ENCODE measurements at regions of chr14 and their contacts with region 1.

Region 1: DNA sequence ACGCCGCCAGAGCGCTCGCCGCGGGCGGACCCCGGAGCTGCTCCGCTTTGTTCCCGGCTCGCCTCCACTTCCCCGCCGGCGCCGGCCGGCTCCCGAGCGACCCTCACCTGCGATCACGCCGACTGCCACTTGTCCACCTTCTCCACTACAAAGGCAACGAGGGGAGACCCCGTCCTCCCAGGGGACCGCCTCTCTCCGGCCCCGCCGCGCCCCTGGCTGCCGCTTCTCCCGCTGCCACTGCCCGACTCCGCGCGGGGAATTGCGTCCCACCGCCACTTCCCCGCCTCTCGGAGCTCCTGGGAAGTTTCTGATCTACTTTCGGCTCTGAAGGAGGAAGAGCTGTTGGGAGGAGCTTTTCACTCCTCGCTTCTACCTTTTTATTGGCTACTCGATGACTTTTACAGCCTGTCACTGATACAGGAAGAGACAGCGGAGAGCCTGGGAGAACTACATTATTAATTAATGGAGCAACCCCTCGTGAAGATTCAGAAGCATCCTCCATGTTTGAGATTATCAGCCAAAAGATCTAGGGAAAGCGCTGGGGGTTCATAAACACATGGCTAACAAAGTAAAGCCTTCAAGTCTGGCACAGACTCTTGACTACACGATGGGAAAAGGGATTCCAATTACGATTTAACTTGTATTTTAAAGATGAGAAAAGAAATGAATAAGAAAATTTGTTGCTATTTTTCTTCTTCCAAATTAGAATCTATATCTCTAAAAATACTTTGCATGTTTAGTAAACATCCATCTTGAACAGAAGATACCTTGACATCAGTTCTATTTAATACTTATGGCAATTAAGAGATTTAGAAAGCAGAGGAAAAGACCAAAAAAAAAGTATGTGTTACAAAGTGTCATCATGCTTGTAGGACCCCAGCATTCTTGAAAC is at the start of gene BAZ1A:
- DNase-seq: peak; percentile 72
- ATAC-seq: peak; percentile 9
- H3K4me3 ChIP-seq: peak within 1 kb of the TSS; percentile 89 to 97 (median 92)
- H3K4me3 Mint-ChIP-seq: peak within 1 kb of the TSS; percentile 100
- H3K27ac ChIP-seq: peak within 1 kb of the TSS; percentile 100
- H3K27ac Mint-ChIP-seq: peak within 1 kb of the TSS; percentile 100
- H3K4me1 ChIP-seq: peaks cover 18% of the 10 kb centered on the region in 2 donors
- H3K4me1 Mint-ChIP-seq: peaks cover 37% of the 10 kb centered on the region
- H3K27me3 ChIP-seq: no peaks in the 10 kb centered on the region
- H3K27me3 Mint-ChIP-seq: no peaks in the 10 kb centered on the region
- CTCF ChIP-seq: no peak
- total RNA-seq, gene BAZ1A: 36.8 and 41.7 TPM in 2 replicates

Region 2: DNA sequence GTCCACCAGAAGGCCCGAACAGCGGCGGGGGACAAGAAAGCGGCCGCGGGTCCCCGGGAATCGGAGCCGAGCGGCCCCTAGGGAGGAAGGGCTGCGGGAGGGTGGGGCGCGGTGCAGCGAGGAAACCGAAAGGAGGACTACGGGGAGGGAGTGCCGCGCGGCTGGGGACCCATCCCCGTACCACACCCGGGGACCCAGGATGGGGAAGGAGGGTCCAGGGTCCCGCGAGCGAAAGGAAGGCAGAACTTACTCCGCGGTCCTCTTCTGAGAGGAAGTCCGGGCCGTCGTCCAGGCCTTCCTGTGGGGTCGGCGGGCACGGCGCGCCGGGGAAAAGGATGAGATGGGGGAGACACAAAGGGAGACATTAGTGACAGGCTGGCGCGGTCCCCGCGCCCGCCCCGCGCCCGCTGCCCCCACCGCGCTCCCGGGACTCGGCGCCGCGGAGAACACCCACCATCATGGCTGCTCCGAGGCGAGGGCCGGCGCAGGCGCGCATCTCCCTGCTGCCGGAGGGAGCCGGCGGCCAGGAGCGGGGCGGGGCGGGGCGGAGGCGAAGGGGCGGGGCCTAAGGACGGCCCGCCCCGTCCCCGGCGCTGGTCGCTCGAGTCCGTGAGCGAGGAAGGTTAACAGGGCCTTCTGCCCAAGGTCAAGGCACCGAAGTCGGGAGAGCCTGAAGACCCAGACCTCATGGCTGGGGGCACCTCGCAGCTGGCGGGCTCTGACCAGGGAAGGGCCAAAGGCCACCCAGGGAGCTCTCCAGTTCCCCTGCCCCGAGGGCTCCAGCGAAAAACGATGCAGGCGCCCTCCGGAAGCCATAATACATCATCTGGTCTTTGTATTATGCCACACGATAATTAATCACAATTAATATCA is 245.4 kb before region 1 on chr14 and contains the start of gene SNX6:
- CTCF ChIA-PET with region 1: no interaction called
- POLR2A ChIA-PET with region 1: no interaction called
- intact Hi-C with region 1: loop called (anchors 1 kb)
- DNase-seq: peak; percentile 89
- ATAC-seq: peak; percentile 98
- H3K4me3 ChIP-seq: peak within 1 kb of the TSS; percentile 50 to 98 (median 96)
- H3K4me3 Mint-ChIP-seq: peak within 1 kb of the TSS; percentile 95
- H3K27ac ChIP-seq: peak within 1 kb of the TSS; percentile 85 to 94
- H3K27ac Mint-ChIP-seq: peak within 1 kb of the TSS; percentile 93
- H3K4me1 ChIP-seq: peaks cover 11 to 18% of the 10 kb centered on the region in 2 donors
- H3K4me1 Mint-ChIP-seq: peaks cover 18% of the 10 kb centered on the region
- H3K27me3 ChIP-seq: peaks cover 0 to 3% (median 0%) of the 10 kb centered on the region in 4 experiments
- H3K27me3 Mint-ChIP-seq: no peaks in the 10 kb centered on the region
- CTCF ChIP-seq: no peak
- total RNA-seq, gene SNX6: 61.0 and 66.3 TPM in 2 replicates

Region 3: DNA sequence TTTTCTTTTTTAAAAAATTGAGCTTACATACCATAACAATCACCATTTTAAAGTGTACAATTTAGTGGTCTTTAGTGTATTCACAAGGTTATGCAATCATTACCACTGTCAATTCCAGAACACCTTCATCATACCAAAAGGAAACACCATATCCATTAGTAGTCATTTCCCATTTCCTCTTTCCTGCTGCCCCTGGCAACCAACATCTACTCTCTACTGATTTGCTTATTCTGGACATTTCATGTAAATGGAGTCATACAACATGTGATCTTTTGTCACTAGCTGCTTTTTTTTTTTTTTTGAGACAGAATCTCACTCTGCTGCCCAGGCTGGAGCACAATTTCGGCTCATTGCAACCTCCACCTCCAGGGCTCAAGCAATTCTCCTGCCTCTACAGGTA is 94.0 kb before region 1 on chr14:
- CTCF ChIA-PET with region 1: interaction called, 3 read pairs
- POLR2A ChIA-PET with region 1: no interaction called
- intact Hi-C with region 1: loop called (anchors 10 kb)
- DNase-seq: no peak
- ATAC-seq: no peak
- H3K4me3 ChIP-seq: no peak overlapping the region
- H3K4me3 Mint-ChIP-seq: no peak overlapping the region
- H3K27ac ChIP-seq: peak overlapping the region in 1 of 2 donors; percentile 25
- H3K27ac Mint-ChIP-seq: no peak overlapping the region
- H3K4me1 ChIP-seq: peaks cover 7 to 11% of the 10 kb centered on the region in 2 donors
- H3K4me1 Mint-ChIP-seq: peaks cover 10% of the 10 kb centered on the region
- H3K27me3 ChIP-seq: no peaks in the 10 kb centered on the region
- H3K27me3 Mint-ChIP-seq: no peaks in the 10 kb centered on the region
- CTCF ChIP-seq: no peak

Region 4: DNA sequence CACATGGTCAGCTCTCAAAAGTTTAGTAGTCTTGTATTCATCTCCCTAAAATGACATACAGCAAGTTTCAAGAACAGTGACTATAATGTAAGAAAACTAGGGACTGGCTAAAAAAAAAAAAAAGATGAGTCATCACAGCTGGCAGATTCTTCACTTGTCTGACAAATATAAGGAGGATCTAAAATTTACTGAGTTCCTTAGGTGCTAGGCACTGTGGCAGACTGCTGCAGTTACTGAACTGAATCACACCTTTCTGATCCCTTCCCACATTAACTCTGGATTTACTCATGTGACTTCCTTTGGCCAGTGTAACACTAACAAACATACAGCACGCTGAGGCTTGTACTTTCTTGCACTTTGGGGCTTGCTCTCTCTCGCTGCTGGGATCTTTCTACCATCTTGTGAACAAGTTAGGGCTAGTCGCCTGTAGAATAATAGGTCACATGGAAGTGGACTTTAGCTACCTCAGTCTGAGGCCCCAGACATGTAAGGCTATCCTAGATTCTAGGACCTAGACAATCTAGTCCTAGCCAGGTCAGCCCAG is 32.2 kb before region 1 on chr14:
- CTCF ChIA-PET with region 1: no interaction called
- POLR2A ChIA-PET with region 1: interaction called, 10 read pairs
- intact Hi-C with region 1: no loop called
- DNase-seq: no peak
- ATAC-seq: no peak
- H3K4me3 ChIP-seq: no peak overlapping the region
- H3K4me3 Mint-ChIP-seq: no peak overlapping the region
- H3K27ac ChIP-seq: no peak overlapping the region
- H3K27ac Mint-ChIP-seq: no peak overlapping the region
- H3K4me1 ChIP-seq: no peaks in the 10 kb centered on the region
- H3K4me1 Mint-ChIP-seq: peaks cover 5% of the 10 kb centered on the region
- H3K27me3 ChIP-seq: no peaks in the 10 kb centered on the region
- H3K27me3 Mint-ChIP-seq: no peaks in the 10 kb centered on the region
- CTCF ChIP-seq: no peak

Region 5: GRCh38 chr14:34912178-34912577 is 36.9 kb after region 1 on chr14:
- CTCF ChIA-PET with region 1: no interaction called
- POLR2A ChIA-PET with region 1: no interaction called
- intact Hi-C with region 1: no loop called
- DNase-seq: peak; percentile 27
- ATAC-seq: no peak
- H3K4me3 ChIP-seq: no peak overlapping the region
- H3K4me3 Mint-ChIP-seq: no peak overlapping the region
- H3K27ac ChIP-seq: no peak overlapping the region
- H3K27ac Mint-ChIP-seq: no peak overlapping the region
- H3K4me1 ChIP-seq: peaks cover 7 to 8% of the 10 kb centered on the region in 2 donors
- H3K4me1 Mint-ChIP-seq: peaks cover 14% of the 10 kb centered on the region
- H3K27me3 ChIP-seq: no peaks in the 10 kb centered on the region
- H3K27me3 Mint-ChIP-seq: no peaks in the 10 kb centered on the region
- CTCF ChIP-seq: no peak

Region 6: GRCh38 chr14:35046048-35046741 is 170.9 kb after region 1 on chr14 and contains the start of gene FAM177A1:
- CTCF ChIA-PET with region 1: no interaction called
- POLR2A ChIA-PET with region 1: interaction called, 6 read pairs
- intact Hi-C with region 1: loop called (anchors 1 kb)
- DNase-seq: peak; percentile 99
- ATAC-seq: peak; percentile 94
- H3K4me3 ChIP-seq: peak within 1 kb of the TSS; percentile 70 to 97 (median 80)
- H3K4me3 Mint-ChIP-seq: peak within 1 kb of the TSS; percentile 87
- H3K27ac ChIP-seq: peak within 1 kb of the TSS; percentile 94 to 96
- H3K27ac Mint-ChIP-seq: peak within 1 kb of the TSS; percentile 95
- H3K4me1 ChIP-seq: peaks cover 11 to 15% of the 10 kb centered on the region in 2 donors
- H3K4me1 Mint-ChIP-seq: peaks cover 26% of the 10 kb centered on the region
- H3K27me3 ChIP-seq: no peaks in the 10 kb centered on the region
- H3K27me3 Mint-ChIP-seq: no peaks in the 10 kb centered on the region
- CTCF ChIP-seq: no peak
- total RNA-seq, gene FAM177A1: 32.1 and 39.4 TPM in 2 replicates

Region 7: GRCh38 chr14:35140718-35141581 is 265.7 kb after region 1 on chr14:
- CTCF ChIA-PET with region 1: no interaction called
- POLR2A ChIA-PET with region 1: no interaction called
- intact Hi-C with region 1: no loop called
- DNase-seq: peak; percentile 29
- ATAC-seq: peak; percentile 41
- H3K4me3 ChIP-seq: no peak overlapping the region
- H3K4me3 Mint-ChIP-seq: no peak overlapping the region
- H3K27ac ChIP-seq: no peak overlapping the region
- H3K27ac Mint-ChIP-seq: no peak overlapping the region
- H3K4me1 ChIP-seq: no peaks in the 10 kb centered on the region
- H3K4me1 Mint-ChIP-seq: no peaks in the 10 kb centered on the region
- H3K27me3 ChIP-seq: no peaks in the 10 kb centered on the region
- H3K27me3 Mint-ChIP-seq: no peaks in the 10 kb centered on the region
- CTCF ChIP-seq: peak; percentile 80

Region 8: DNA sequence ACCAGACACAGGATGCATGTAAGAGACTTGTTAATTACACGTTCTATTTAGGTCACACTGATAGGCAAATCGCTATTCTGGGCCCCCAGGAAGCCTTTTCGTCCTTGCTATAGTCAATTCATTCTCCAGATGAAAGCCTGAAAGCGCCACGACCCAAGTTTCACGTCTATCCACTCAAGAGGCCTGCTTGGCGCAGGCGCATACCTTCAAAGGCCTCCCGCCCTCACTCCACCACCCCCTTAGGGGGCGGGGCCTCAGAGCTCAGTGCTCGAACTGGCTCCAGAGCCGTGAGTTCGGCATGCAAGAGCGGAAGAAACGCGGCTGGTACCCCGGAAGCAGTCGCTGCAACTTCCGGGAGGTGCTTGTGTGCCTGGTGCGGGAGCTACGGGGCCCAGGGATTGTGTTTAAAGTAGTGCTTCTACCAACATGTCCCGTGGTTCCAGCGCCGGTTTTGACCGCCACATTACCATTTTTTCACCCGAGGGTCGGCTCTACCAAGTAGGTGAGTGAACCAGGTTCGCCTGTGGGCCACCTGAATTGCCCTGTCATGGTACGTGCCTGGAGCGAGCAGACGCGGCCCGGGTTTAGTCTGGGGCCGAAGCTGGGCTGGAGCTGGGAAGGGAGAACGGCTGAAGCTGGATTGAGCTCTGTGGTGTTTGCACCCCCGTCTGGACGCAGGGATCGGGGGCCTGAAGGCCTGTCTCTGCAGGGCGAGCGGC is 416.9 kb after region 1 on chr14 and contains the start of gene PSMA6:
- CTCF ChIA-PET with region 1: no interaction called
- POLR2A ChIA-PET with region 1: no interaction called
- intact Hi-C with region 1: loop called (anchors 1 kb)
- DNase-seq: peak; percentile 99
- ATAC-seq: peak; percentile 98
- H3K4me3 ChIP-seq: peak within 1 kb of the TSS; percentile 71 to 96 (median 93)
- H3K4me3 Mint-ChIP-seq: peak within 1 kb of the TSS; percentile 99
- H3K27ac ChIP-seq: peak within 1 kb of the TSS; percentile 75 to 93
- H3K27ac Mint-ChIP-seq: peak within 1 kb of the TSS; percentile 96
- H3K4me1 ChIP-seq: peaks cover 34 to 44% of the 10 kb centered on the region in 2 donors
- H3K4me1 Mint-ChIP-seq: peaks cover 44% of the 10 kb centered on the region
- H3K27me3 ChIP-seq: no peaks in the 10 kb centered on the region
- H3K27me3 Mint-ChIP-seq: no peaks in the 10 kb centered on the region
- CTCF ChIP-seq: no peak
- total RNA-seq, gene PSMA6: 70.6 and 86.8 TPM in 2 replicates

Region 9: GRCh38 chr14:35341446-35342159 is 466.3 kb after region 1 on chr14:
- CTCF ChIA-PET with region 1: no interaction called
- POLR2A ChIA-PET with region 1: no interaction called
- intact Hi-C with region 1: no loop called
- DNase-seq: no peak
- ATAC-seq: peak; percentile 49
- H3K4me3 ChIP-seq: no peak overlapping the region
- H3K4me3 Mint-ChIP-seq: no peak overlapping the region
- H3K27ac ChIP-seq: no peak overlapping the region
- H3K27ac Mint-ChIP-seq: no peak overlapping the region
- H3K4me1 ChIP-seq: peaks cover 16 to 26% of the 10 kb centered on the region in 2 donors
- H3K4me1 Mint-ChIP-seq: peaks cover 22% of the 10 kb centered on the region
- H3K27me3 ChIP-seq: no peaks in the 10 kb centered on the region
- H3K27me3 Mint-ChIP-seq: no peaks in the 10 kb centered on the region
- CTCF ChIP-seq: no peak

Measured in B cell (primary cell).